ENCODE measurements at regions of chr17 and their contacts with region 1.

Region 1: GRCh38 chr17:77645072-77646045 is 313.1 kb upstream of the TNRC6C start:
- DNase-seq: no peak
- H3K4me3 ChIP-seq: no peak overlapping the region
- H3K27ac ChIP-seq: no peak overlapping the region
- H3K4me1 ChIP-seq: no peaks in the 10 kb centered on the region
- H3K27me3 ChIP-seq: peaks cover 3% of the 10 kb centered on the region
- CTCF ChIP-seq: no peak

Region 2: DNA sequence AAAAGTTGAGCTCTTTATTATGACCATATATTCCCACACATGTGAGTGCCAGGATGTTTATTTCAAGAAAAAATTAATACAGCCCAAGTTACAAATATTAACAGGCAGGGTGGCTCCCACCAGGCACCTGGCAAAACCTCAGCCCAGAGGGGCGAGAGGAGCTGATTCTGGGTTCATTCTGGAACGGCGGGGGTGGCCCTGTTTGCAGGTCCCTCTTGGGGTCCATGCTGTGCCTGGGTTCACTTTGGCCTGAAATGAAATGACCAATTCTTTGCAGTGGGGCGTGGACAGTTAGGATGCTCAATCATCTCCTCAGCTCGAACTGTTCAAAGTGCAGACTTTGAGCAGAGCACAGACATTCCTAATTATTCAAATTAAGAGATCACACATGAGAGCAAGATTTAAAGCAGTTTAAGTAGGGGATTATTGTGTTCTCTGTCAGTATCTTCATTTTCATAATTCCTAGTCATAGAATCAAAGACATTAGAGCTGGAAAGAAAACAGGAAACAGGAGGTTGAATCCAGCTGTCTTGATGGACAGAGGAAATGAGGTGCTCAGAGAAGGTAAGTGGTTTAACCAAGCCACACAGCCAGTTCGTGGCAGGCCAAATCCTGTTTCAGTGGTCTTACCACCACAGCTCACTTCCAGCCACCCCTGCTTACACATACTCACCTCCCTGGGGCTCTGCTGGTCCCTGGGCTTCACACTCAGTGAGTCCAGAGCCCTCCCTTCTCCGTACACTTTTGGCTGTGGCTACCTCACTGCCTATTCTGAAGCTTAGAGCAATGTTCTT is 50.7 kb before region 1 on chr17:
- CTCF ChIA-PET with region 1: no interaction called
- dilution Hi-C with region 1: loop called (anchors 5 kb)
- in situ Hi-C with region 1: no loop called
- intact Hi-C with region 1: no loop called
- DNase-seq: no peak
- H3K4me3 ChIP-seq: no peak overlapping the region
- H3K27ac ChIP-seq: no peak overlapping the region
- H3K4me1 ChIP-seq: no peaks in the 10 kb centered on the region
- H3K27me3 ChIP-seq: no peaks in the 10 kb centered on the region
- CTCF ChIP-seq: no peak

Region 3: GRCh38 chr17:77690271-77691161 is 45.2 kb after region 1 on chr17:
- CTCF ChIA-PET with region 1: no interaction called
- dilution Hi-C with region 1: loop called (anchors 5 kb)
- in situ Hi-C with region 1: no loop called
- intact Hi-C with region 1: no loop called
- DNase-seq: no peak
- H3K4me3 ChIP-seq: no peak overlapping the region
- H3K27ac ChIP-seq: no peak overlapping the region
- H3K4me1 ChIP-seq: peaks cover 7% of the 10 kb centered on the region
- H3K27me3 ChIP-seq: peaks cover 16% of the 10 kb centered on the region
- CTCF ChIP-seq: no peak

Region 4: DNA sequence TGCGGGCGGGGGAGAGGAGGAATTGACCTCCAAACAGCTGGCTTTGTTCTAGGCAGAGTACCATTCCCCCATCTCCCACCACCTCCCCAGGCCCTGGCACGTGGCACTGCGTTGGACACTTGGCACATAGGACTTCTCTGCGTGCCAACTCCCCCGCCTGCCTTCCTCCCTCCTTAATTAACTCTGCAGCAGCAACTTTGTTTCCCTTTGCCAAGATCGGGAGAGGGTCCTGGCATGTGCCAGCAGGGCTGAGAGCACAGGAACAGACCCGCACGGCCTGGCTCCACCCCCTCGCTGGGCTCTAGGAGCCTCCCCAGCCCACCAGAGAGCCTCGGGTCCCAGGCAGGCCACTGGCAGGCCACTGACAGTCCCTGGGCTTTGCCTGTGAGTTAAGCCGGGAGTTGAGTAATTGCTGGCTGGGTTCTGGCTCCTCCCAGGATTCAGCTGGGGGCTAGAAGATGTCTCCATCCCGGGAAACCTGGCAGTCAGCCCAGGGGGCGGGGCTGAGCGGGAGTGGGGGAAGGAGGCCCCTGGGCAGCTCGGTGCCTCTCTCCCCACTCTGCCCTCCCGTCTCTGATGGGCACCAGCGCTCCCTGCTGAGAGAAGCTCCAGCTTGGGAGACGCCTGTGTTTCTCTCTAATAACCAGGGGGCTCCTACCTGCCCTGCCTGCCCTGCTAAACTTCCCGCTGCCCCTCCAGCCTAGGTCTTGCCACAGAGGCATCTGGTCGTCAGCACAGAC is 89.2 kb after region 1 on chr17:
- CTCF ChIA-PET with region 1: no interaction called
- dilution Hi-C with region 1: loop called (anchors 5 kb)
- in situ Hi-C with region 1: no loop called
- intact Hi-C with region 1: no loop called
- DNase-seq: no peak
- H3K4me3 ChIP-seq: no peak overlapping the region
- H3K27ac ChIP-seq: no peak overlapping the region
- H3K4me1 ChIP-seq: peaks cover 3% of the 10 kb centered on the region
- H3K27me3 ChIP-seq: no peaks in the 10 kb centered on the region
- CTCF ChIP-seq: peak in 1 of 2 donors; percentile 6